SK-N-SH (cell line): ENCODE measurements at regions of chr2 and their contacts with region 1.

Region 1: GRCh38 chr2:11124503-11125068 is 30.7 kb upstream of the SLC66A3 start:
- DNase-seq: peak; percentile 92
- H3K4me3 ChIP-seq: no peak overlapping the region; a peak in 1 of 4 replicates
- H3K27ac ChIP-seq: no peak overlapping the region
- H3K4me1 ChIP-seq: peaks cover 0 to 2% of the 10 kb centered on the region in 2 experiments; a peak in 1 of 4 replicates
- H3K27me3 ChIP-seq: no peaks in the 10 kb centered on the region
- CTCF ChIP-seq: peak; percentile 97
- EP300 ChIP-seq: no peak
- RAD21 ChIP-seq: peak; percentile 95

Region 2: DNA sequence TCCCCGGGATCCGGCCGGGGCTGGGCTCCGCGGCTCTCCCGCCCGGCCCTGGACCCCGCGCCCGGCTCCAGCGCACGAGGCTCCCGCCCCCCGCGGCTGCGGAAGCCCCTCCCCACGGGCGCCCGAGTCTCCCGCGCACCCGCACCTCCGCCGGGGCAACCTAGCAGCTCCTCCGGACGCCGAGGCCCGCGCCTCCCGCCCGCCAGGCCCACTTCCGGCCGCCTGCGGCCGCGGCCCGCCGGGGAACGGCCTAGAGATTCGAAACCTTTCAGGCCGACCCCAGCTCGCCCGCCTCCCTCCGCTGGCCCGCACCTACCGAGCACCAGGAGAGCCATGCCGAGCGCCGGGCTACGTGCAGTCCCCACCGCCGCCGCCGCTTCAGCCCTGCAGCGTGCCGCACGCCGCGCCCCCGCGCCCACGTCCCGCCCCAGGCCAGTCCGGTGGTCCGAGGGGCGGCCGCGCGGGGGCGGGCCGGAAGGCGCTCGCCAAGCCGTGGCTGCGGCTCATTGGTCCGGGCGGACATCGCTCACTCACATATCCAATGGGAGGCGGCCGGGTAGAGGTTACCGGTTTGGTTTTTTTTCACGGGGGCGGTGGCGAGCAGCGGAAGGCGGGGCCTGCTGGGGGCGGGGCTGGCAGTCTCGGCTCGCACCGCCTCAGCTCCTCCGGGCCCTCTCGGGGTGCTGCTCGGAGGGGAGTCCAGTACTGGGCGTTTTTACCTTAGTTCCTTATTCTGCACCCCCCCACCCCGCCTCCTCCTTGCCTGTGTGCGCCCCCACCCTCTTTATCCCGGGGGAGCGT is 312.0 kb before region 1 on chr2 and contains the start of gene PDIA6:
- CTCF ChIA-PET with region 1: interaction called, 18 read pairs
- POLR2A ChIA-PET with region 1: no interaction called
- DNase-seq: peak; percentile 100
- H3K4me3 ChIP-seq: peak within 1 kb of the TSS; percentile 53 to 86
- H3K27ac ChIP-seq: peak within 1 kb of the TSS; percentile 68 to 93
- H3K4me1 ChIP-seq: peaks cover 0 to 47% of the 10 kb centered on the region in 2 experiments; a peak in 2 of 4 replicates
- H3K27me3 ChIP-seq: no peaks in the 10 kb centered on the region
- CTCF ChIP-seq: no peak
- EP300 ChIP-seq: peak in 1 of 2 experiments; percentile 32; a peak in 2 of 4 replicates
- RAD21 ChIP-seq: no peak
- polyA plus RNA-seq, gene PDIA6: 308 and 325 TPM in 2 replicates

Region 3: GRCh38 chr2:10873790-10874437 is 250.7 kb before region 1 on chr2:
- CTCF ChIA-PET with region 1: interaction called, 13 read pairs
- POLR2A ChIA-PET with region 1: no interaction called
- DNase-seq: no peak
- H3K4me3 ChIP-seq: no peak overlapping the region
- H3K27ac ChIP-seq: no peak overlapping the region
- H3K4me1 ChIP-seq: peaks cover 5 to 8% of the 10 kb centered on the region in 2 experiments; a peak in 3 of 4 replicates
- H3K27me3 ChIP-seq: no peaks in the 10 kb centered on the region
- CTCF ChIP-seq: no peak
- EP300 ChIP-seq: no peak
- RAD21 ChIP-seq: no peak

Region 4: DNA sequence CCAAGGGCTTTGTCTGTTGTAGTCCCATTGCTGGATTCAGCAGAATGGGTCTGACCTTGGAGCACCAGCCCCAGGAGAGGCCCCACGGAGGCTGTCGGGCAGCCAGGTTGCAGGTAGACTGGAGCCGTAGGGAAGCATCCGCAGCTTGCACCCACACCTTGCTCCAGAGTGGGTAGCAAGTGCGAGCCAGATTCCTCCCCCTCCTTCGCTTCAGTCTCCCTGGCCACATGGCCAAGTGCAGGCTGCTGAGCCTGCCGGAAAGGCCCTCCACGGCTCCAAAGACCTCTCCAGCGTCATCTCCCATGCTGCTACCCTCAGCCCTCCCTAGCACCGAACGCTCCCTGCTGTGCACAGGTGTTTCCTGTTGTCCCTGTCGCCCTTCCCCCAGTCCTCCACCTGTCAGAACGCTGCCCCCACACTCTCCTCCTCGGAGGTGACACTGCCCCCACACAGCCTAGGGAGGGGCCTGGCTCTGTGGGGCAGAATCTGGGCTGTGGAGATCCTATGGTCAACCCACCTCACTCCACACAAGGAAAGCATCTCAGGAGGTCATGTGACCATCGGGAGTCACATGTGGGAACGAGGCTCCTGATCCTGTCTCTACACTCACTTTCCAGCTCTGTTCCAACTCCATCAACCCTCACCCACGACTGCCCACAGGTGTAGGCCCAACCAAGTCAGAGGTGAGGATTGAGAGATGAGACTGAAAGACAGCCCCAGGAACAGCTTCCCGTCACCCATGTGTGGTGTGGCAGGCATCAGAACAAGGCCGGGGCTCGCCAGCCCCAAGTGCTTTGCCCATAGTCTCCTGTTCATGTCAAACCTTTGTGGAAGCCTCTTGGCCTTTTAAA is 204.6 kb before region 1 on chr2:
- CTCF ChIA-PET with region 1: interaction called, 11 read pairs
- POLR2A ChIA-PET with region 1: no interaction called
- DNase-seq: no peak
- H3K4me3 ChIP-seq: no peak overlapping the region
- H3K27ac ChIP-seq: no peak overlapping the region
- H3K4me1 ChIP-seq: peaks cover 0 to 6% of the 10 kb centered on the region in 2 experiments; a peak in 1 of 4 replicates
- H3K27me3 ChIP-seq: no peaks in the 10 kb centered on the region; the same call in 1 of the 2 replicates
- CTCF ChIP-seq: no peak
- EP300 ChIP-seq: no peak
- RAD21 ChIP-seq: no peak

Region 5: DNA sequence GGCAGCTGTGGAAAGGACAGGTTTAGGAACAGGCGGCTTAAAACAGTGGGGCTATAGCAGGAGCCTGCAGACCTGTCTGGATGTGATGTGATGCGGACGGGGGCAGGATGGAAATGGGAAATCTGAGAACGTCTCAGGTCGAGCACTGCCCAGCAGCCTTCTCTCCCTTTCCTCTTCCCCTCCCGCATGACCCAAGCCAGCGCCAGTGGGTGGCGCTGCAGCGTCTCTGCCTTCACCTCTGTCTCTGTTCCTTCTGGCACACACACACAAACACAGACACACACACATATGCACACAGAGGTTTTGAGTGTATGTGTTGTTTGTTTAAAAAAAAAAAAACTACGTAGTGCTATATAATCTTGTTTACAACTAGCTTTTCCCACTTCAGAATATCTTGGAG is 51.3 kb before region 1 on chr2:
- CTCF ChIA-PET with region 1: interaction called, 19 read pairs
- POLR2A ChIA-PET with region 1: no interaction called
- DNase-seq: peak; percentile 54
- H3K4me3 ChIP-seq: no peak overlapping the region
- H3K27ac ChIP-seq: no peak overlapping the region
- H3K4me1 ChIP-seq: no peaks in the 10 kb centered on the region
- H3K27me3 ChIP-seq: no peaks in the 10 kb centered on the region
- CTCF ChIP-seq: peak; percentile 57
- EP300 ChIP-seq: no peak
- RAD21 ChIP-seq: peak; percentile 48

Region 6: GRCh38 chr2:11103984-11104793 is 20.4 kb before region 1 on chr2:
- CTCF ChIA-PET with region 1: interaction called, 22 read pairs
- POLR2A ChIA-PET with region 1: no interaction called
- DNase-seq: no peak
- H3K4me3 ChIP-seq: no peak overlapping the region
- H3K27ac ChIP-seq: no peak overlapping the region
- H3K4me1 ChIP-seq: no peaks in the 10 kb centered on the region
- H3K27me3 ChIP-seq: no peaks in the 10 kb centered on the region
- CTCF ChIP-seq: no peak
- EP300 ChIP-seq: no peak
- RAD21 ChIP-seq: no peak

Region 7: GRCh38 chr2:11242542-11243174 is 118.1 kb after region 1 on chr2:
- CTCF ChIA-PET with region 1: no interaction called
- POLR2A ChIA-PET with region 1: no interaction called
- DNase-seq: no peak
- H3K4me3 ChIP-seq: no peak overlapping the region
- H3K27ac ChIP-seq: no peak overlapping the region
- H3K4me1 ChIP-seq: peaks cover 0 to 5% of the 10 kb centered on the region in 2 experiments; a peak in 1 of 4 replicates
- H3K27me3 ChIP-seq: no peaks in the 10 kb centered on the region
- CTCF ChIP-seq: no peak
- EP300 ChIP-seq: no peak
- RAD21 ChIP-seq: no peak